Dendritic cell treated with granulocyte-macrophage colony-stimulating factor and Interleukin-4, amounts not matched to agents 40 ng/mL and 50 ng/mL, for 4 days (primary cell): ENCODE measurements at regions of chr17 and their contacts with region 1.

Region 1: GRCh38 chr17:48878918-48879898 is 13.4 kb upstream of the ATP5MC1 start:
- H3K4me3 Mint-ChIP-seq: no peak overlapping the region
- H3K27ac Mint-ChIP-seq: no peak overlapping the region
- H3K4me1 Mint-ChIP-seq: peaks cover 7% of the 10 kb centered on the region
- H3K27me3 Mint-ChIP-seq: peaks cover 30% of the 10 kb centered on the region

Region 2: GRCh38 chr17:48678141-48678971 is 200.9 kb before region 1 on chr17:
- intact Hi-C with region 1: loop called (anchors 5 kb)
- H3K4me3 Mint-ChIP-seq: no peak overlapping the region
- H3K27ac Mint-ChIP-seq: no peak overlapping the region
- H3K4me1 Mint-ChIP-seq: peaks cover 7% of the 10 kb centered on the region
- H3K27me3 Mint-ChIP-seq: peaks cover 66% of the 10 kb centered on the region

Region 3: GRCh38 chr17:48724251-48725003 is 154.8 kb before region 1 on chr17:
- intact Hi-C with region 1: loop called (anchors 2 kb)
- H3K4me3 Mint-ChIP-seq: no peak overlapping the region
- H3K27ac Mint-ChIP-seq: no peak overlapping the region
- H3K4me1 Mint-ChIP-seq: peaks cover 51% of the 10 kb centered on the region
- H3K27me3 Mint-ChIP-seq: peaks cover 94% of the 10 kb centered on the region

Region 4: GRCh38 chr17:48791128-48792032 is 87.8 kb before region 1 on chr17:
- intact Hi-C with region 1: no loop called
- H3K4me3 Mint-ChIP-seq: no peak overlapping the region
- H3K27ac Mint-ChIP-seq: no peak overlapping the region
- H3K4me1 Mint-ChIP-seq: peaks cover 6% of the 10 kb centered on the region
- H3K27me3 Mint-ChIP-seq: peaks cover 68% of the 10 kb centered on the region

Region 5: GRCh38 chr17:48804925-48805411 is 74.2 kb before region 1 on chr17:
- intact Hi-C with region 1: loop called (anchors 2 kb)
- H3K4me3 Mint-ChIP-seq: no peak overlapping the region
- H3K27ac Mint-ChIP-seq: no peak overlapping the region
- H3K4me1 Mint-ChIP-seq: peaks cover 12% of the 10 kb centered on the region
- H3K27me3 Mint-ChIP-seq: peaks cover 47% of the 10 kb centered on the region

Region 6: DNA sequence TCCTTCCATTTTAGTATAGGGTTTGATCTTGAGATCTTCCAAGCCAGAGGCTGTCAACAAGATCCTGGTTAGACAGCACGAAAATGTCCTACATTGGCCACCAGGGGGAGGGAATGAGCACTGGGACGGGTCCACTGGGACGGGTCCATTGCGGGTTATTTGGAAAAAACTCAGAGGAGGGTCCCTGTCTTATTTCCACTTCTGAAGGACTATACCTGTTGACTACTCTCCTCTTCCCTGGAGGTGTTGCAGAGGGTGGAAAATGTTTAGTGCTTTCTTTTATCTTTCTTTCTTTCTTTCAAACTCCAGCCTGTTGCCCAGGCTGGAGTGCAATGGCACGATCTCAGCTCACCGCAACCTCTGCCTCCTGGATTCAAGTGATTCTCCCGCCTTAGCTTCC is 64.7 kb before region 1 on chr17:
- intact Hi-C with region 1: loop called (anchors 1 kb)
- H3K4me3 Mint-ChIP-seq: no peak overlapping the region
- H3K27ac Mint-ChIP-seq: no peak overlapping the region
- H3K4me1 Mint-ChIP-seq: peaks cover 9% of the 10 kb centered on the region
- H3K27me3 Mint-ChIP-seq: peaks cover 69% of the 10 kb centered on the region

Region 7: GRCh38 chr17:48933035-48933434 is 53.8 kb after region 1 on chr17:
- intact Hi-C with region 1: no loop called
- H3K4me3 Mint-ChIP-seq: no peak overlapping the region
- H3K27ac Mint-ChIP-seq: no peak overlapping the region
- H3K4me1 Mint-ChIP-seq: peaks cover 12% of the 10 kb centered on the region
- H3K27me3 Mint-ChIP-seq: no peaks in the 10 kb centered on the region

Region 8: GRCh38 chr17:49031965-49032928 is 153.0 kb after region 1 on chr17:
- intact Hi-C with region 1: loop called (anchors 2 kb)
- H3K4me3 Mint-ChIP-seq: no peak overlapping the region
- H3K27ac Mint-ChIP-seq: no peak overlapping the region
- H3K4me1 Mint-ChIP-seq: no peaks in the 10 kb centered on the region
- H3K27me3 Mint-ChIP-seq: peaks cover 21% of the 10 kb centered on the region